K562 (cell line): ENCODE measurements at regions of chr1 and their contacts with region 1.

Region 1: GRCh38 chr1:30911046-30911954 is 2.7 kb upstream of the SDC3 start:
- DNase-seq: peak; percentile 80 to 94 (median 86)
- ATAC-seq: peak; percentile 78
- H3K4me3 ChIP-seq: no peak overlapping the region
- H3K27ac ChIP-seq: no peak overlapping the region
- H3K4me1 ChIP-seq: peaks cover 31 to 53% of the 10 kb centered on the region in 2 experiments
- H3K27me3 ChIP-seq: no peaks in the 10 kb centered on the region
- CTCF ChIP-seq: peak; percentile 96 to 97 (median 96)
- EP300 ChIP-seq: peak; percentile 31; the same call in 1 of the 2 replicates
- POLR2A ChIP-seq: no peak
- RAD21 ChIP-seq: peak; percentile 100

Region 2: DNA sequence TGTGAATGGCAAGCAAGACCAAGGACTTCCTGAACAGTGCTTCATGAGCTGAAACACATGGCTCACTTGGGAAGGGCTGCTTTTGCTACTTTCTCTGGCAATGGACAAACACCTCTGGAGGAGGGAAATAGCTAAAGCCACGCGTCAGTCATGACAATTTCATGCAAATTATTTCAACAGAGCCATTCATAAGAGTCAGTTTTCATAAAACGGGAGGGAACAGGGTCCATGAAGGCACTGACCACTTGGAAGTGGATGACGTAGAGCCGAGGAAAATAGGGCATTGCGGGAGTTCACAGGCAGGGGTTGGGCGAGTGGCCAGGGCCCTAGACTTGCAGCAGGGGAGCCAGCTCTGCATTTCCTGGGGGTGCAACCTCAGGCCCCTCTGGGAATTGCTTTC is 46.6 kb before region 1 on chr1:
- CTCF ChIA-PET with region 1: no interaction called
- POLR2A ChIA-PET with region 1: interaction called, 3 read pairs
- in situ Hi-C with region 1: no loop called
- intact Hi-C with region 1: loop called (anchors 5 kb)
- DNase-seq: no peak
- ATAC-seq: no peak; the same call in 2 of the 3 replicates
- H3K4me3 ChIP-seq: no peak overlapping the region
- H3K27ac ChIP-seq: no peak overlapping the region
- H3K4me1 ChIP-seq: peaks cover under 1 to 9% of the 10 kb centered on the region in 2 experiments; a peak in 4 of 5 replicates
- H3K27me3 ChIP-seq: no peaks in the 10 kb centered on the region
- CTCF ChIP-seq: no peak
- EP300 ChIP-seq: no peak
- POLR2A ChIP-seq: no peak
- RAD21 ChIP-seq: no peak

Region 3: GRCh38 chr1:30895944-30896660 is 15.2 kb before region 1 on chr1:
- CTCF ChIA-PET with region 1: no interaction called
- POLR2A ChIA-PET with region 1: interaction called, 12 read pairs
- in situ Hi-C with region 1: no loop called
- intact Hi-C with region 1: no loop called
- DNase-seq: no peak
- ATAC-seq: peak; percentile 69
- H3K4me3 ChIP-seq: no peak overlapping the region
- H3K27ac ChIP-seq: peak overlapping the region; percentile 66; the same call in 1 of the 3 replicates
- H3K4me1 ChIP-seq: peaks cover 52 to 64% of the 10 kb centered on the region in 2 experiments
- H3K27me3 ChIP-seq: no peaks in the 10 kb centered on the region
- CTCF ChIP-seq: no peak
- EP300 ChIP-seq: peak; percentile 74
- POLR2A ChIP-seq: no peak
- RAD21 ChIP-seq: no peak

Region 4: GRCh38 chr1:30929135-30929889 is 18.0 kb after region 1 on chr1:
- CTCF ChIA-PET with region 1: interaction called, 6 read pairs
- POLR2A ChIA-PET with region 1: interaction called, 18 read pairs
- in situ Hi-C with region 1: no loop called
- intact Hi-C with region 1: loop called (anchors 1 kb)
- DNase-seq: peak; percentile 74 to 79 (median 78)
- ATAC-seq: peak; percentile 92
- H3K4me3 ChIP-seq: no peak overlapping the region
- H3K27ac ChIP-seq: no peak overlapping the region
- H3K4me1 ChIP-seq: no peaks in the 10 kb centered on the region; a peak in 2 of 5 replicates
- H3K27me3 ChIP-seq: no peaks in the 10 kb centered on the region
- CTCF ChIP-seq: peak; percentile 78 to 95 (median 90)
- EP300 ChIP-seq: no peak
- POLR2A ChIP-seq: no peak; the same call in 1 of the 2 replicates
- RAD21 ChIP-seq: peak; percentile 83 to 96